ENCODE measurements at regions of chr5 and their contacts with region 1.

Region 1: GRCh38 chr5:115544436-115545350 is at the start of gene FEM1C:
- DNase-seq: peak; percentile 98
- H3K4me3 Mint-ChIP-seq: peak within 1 kb of the TSS; percentile 95
- H3K27ac Mint-ChIP-seq: peak within 1 kb of the TSS; percentile 99
- H3K4me1 Mint-ChIP-seq: peaks cover 40% of the 10 kb centered on the region
- H3K27me3 Mint-ChIP-seq: no peaks in the 10 kb centered on the region
- total RNA-seq, gene FEM1C: 9.7 to 10.0 TPM

Region 2: GRCh38 chr5:115262321-115263077 is 282.2 kb before region 1 on chr5 and contains the start of gene PGGT1B:
- CTCF ChIA-PET with region 1: interaction called, 3 read pairs
- intact Hi-C with region 1: loop called (anchors 1 kb)
- DNase-seq: peak; percentile 82
- H3K4me3 Mint-ChIP-seq: peak within 1 kb of the TSS; percentile 92
- H3K27ac Mint-ChIP-seq: peak within 1 kb of the TSS; percentile 93
- H3K4me1 Mint-ChIP-seq: peaks cover 43% of the 10 kb centered on the region
- H3K27me3 Mint-ChIP-seq: no peaks in the 10 kb centered on the region
- total RNA-seq, gene PGGT1B: 35.8 to 37.4 TPM

Region 3: DNA sequence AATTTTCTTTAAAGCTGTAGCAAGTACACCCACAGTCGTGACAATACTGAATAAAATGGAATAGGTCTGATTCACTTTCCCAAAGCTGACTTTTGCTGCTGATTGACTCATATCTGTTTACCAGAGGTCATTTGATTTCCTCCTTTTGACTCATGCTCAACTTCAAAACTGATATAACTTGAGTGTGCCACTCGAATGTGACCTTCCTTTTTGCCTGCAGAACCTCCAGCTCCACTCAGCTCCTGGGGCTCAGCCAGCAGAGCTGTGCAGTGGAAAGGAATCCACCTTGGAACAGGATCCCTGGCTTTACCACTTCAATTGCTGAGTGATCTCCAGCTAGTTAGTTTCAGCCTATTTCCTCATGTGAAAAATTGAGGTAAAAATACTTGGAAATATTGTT is 84.2 kb before region 1 on chr5:
- CTCF ChIA-PET with region 1: no interaction called
- intact Hi-C with region 1: loop called (anchors 1 kb)
- DNase-seq: peak; percentile 29
- H3K4me3 Mint-ChIP-seq: no peak overlapping the region
- H3K27ac Mint-ChIP-seq: no peak overlapping the region
- H3K4me1 Mint-ChIP-seq: peaks cover 3% of the 10 kb centered on the region
- H3K27me3 Mint-ChIP-seq: peaks cover 30% of the 10 kb centered on the region

Region 4: DNA sequence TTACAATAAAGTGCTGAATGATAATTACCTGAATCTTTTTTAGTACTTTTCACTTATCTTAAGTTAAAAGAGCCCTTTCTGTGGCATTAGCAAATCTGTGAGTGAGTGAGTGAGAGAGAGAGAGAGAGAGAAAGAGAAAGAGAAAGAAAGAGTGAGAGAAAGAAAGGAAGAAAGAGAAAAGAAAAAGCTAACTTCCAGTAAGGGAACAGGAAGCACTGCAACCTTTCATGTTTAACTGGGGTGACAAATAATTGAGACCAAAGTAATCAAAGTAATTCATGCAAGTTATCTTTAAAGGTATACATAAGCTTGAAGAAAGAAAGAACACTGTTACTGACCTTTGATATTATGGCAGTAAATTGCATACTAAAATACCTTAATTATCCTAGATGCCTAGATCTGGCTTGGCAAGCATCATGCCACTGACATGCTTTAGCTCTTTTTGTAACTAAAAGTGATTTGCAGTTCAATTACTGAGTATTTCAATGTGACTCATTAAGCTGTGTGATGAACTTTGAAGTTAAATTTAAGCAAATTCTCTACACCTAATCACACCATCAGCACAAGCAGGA is 21.8 kb before region 1 on chr5:
- CTCF ChIA-PET with region 1: interaction called, 3 read pairs
- intact Hi-C with region 1: loop called (anchors 1 kb)
- DNase-seq: no peak
- H3K4me3 Mint-ChIP-seq: peak overlapping the region; percentile 11
- H3K27ac Mint-ChIP-seq: peak overlapping the region; percentile 64
- H3K4me1 Mint-ChIP-seq: peaks cover 36% of the 10 kb centered on the region
- H3K27me3 Mint-ChIP-seq: no peaks in the 10 kb centered on the region

Region 5: DNA sequence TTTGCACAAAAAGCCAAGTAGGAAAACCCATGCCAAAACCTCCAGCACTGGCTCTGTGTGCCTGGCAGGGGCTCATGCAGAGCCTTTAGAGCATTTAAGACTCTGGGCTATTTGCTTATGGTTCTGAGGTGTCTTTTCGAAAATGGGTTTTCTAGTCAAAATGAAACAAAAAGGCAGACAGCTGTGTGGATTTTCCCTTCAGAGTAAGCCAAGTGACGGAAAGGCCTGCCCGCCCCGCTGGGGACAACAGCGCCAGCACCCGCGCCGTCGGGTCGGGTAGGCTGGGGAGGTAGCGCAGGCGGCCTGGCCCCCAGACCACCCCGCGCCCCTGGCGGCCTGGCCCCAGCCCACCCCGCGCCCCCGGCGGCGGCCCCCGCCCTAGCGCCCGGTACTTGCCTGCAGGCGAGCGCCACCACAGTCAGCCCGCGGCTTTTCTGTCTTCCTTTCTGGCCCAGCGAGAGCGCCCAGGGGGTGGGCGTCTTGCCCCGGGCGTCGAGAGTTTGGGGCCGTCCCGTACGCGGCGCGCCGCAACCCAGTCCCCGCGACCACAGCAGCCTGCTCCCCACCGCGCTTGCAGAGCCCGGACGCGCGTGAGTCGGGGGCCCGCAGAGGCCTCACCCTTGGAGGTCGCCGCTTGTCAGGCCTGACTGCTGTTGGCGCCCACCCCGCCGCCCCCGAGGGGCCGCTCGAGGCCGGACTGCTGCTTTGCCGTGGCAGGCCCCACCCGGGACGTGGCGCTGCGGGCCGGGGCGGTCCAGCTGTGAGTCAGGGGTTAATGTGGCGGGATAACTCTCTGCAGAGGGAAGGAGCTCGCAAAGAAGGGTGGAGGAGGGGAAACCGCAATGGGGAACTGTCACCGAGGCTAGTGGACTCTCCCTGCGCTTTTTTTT is 57.3 kb after region 1 on chr5 and contains the start of gene TICAM2:
- CTCF ChIA-PET with region 1: no interaction called
- intact Hi-C with region 1: loop called (anchors 1 kb)
- DNase-seq: peak; percentile 76
- H3K4me3 Mint-ChIP-seq: peak within 1 kb of the TSS; percentile 59
- H3K27ac Mint-ChIP-seq: no peak within 1 kb of the TSS
- H3K4me1 Mint-ChIP-seq: peaks cover 39% of the 10 kb centered on the region
- H3K27me3 Mint-ChIP-seq: no peaks in the 10 kb centered on the region
- total RNA-seq, gene TICAM2: 0.72 to 0.91 TPM

Region 6: DNA sequence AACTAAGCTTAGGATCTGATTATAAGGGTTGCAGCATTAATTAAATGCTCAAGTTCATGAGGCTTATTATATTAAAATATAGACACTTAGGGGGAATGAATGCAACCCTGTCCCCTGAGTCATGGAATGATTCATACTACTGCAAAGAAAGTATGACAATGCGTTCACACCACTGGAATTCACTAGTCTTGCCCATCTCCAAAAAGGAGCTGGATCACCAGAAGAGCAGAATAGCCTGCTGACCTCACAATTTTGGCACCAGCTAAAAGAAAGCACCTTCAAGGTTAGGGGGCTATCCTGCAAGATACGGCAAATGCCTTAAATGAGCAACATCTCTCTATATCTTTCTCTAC is 113.2 kb after region 1 on chr5:
- CTCF ChIA-PET with region 1: no interaction called
- intact Hi-C with region 1: no loop called
- DNase-seq: no peak
- H3K4me3 Mint-ChIP-seq: no peak overlapping the region
- H3K27ac Mint-ChIP-seq: no peak overlapping the region
- H3K4me1 Mint-ChIP-seq: no peaks in the 10 kb centered on the region
- H3K27me3 Mint-ChIP-seq: peaks cover 27% of the 10 kb centered on the region

Region 7: DNA sequence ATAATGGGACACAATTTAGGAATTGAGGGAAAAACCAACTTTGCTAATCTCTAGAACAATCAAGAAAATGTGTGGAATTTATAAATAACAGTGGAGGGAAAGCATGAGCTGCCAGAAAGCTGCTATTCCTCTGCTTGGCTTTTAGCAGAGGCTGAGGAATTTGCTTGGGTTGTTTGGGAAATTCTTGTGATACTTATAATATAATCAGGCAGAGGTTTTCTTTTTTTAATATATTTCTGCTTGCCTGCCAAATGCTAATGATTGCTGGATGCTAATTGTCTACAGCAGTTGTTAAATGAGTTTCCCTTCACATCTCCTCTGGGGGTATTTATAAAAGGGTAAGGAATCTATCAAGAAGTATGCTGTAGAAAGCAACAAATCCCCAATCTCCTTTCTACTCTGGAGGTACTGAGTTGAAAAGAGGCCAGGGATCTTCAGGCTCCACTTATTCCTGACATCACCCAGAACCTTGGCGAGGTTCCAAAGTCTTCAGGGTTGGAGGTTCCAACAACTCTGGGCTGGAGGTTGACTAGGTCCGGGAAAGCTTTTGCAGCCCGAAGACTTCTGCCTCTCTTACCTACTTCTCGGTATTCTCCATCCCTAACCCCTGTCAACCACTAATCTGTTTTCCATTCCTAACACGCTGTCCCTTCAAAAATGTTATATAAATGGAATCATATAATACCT is 141.5 kb after region 1 on chr5:
- CTCF ChIA-PET with region 1: no interaction called
- intact Hi-C with region 1: no loop called
- DNase-seq: no peak
- H3K4me3 Mint-ChIP-seq: no peak overlapping the region
- H3K27ac Mint-ChIP-seq: no peak overlapping the region
- H3K4me1 Mint-ChIP-seq: no peaks in the 10 kb centered on the region
- H3K27me3 Mint-ChIP-seq: peaks cover 26% of the 10 kb centered on the region

Region 8: GRCh38 chr5:116084871-116085715 is 540.4 kb after region 1 on chr5 and contains the start of gene COMMD10:
- CTCF ChIA-PET with region 1: no interaction called
- intact Hi-C with region 1: loop called (anchors 1 kb)
- DNase-seq: peak; percentile 81
- H3K4me3 Mint-ChIP-seq: peak within 1 kb of the TSS; percentile 91
- H3K27ac Mint-ChIP-seq: peak within 1 kb of the TSS; percentile 97
- H3K4me1 Mint-ChIP-seq: peaks cover 45% of the 10 kb centered on the region
- H3K27me3 Mint-ChIP-seq: no peaks in the 10 kb centered on the region
- total RNA-seq, gene COMMD10: 30.0 to 30.9 TPM